Upper lobe of right lung (tissue), 1 donor: ENCODE measurements at regions of chr19 and their contacts with region 1.

Region 1: GRCh38 chr19:2070436-2070827 is 19.4 kb upstream of the MKNK2 start:
- DNase-seq: no peak
- ATAC-seq: no peak
- H3K4me3 ChIP-seq: no peak overlapping the region
- H3K27ac ChIP-seq: no peak overlapping the region
- H3K4me1 ChIP-seq: peaks cover 6% of the 10 kb centered on the region
- H3K27me3 ChIP-seq: no peaks in the 10 kb centered on the region
- CTCF ChIP-seq: no peak

Region 2: GRCh38 chr19:1910169-1910568 is 160.3 kb before region 1 on chr19:
- intact Hi-C with region 1: loop called (anchors 10 kb)
- DNase-seq: no peak
- ATAC-seq: no peak
- H3K4me3 ChIP-seq: no peak overlapping the region
- H3K27ac ChIP-seq: peak overlapping the region; percentile 42
- H3K4me1 ChIP-seq: peaks cover 28% of the 10 kb centered on the region
- H3K27me3 ChIP-seq: no peaks in the 10 kb centered on the region
- CTCF ChIP-seq: no peak

Region 3: GRCh38 chr19:1956868-1957492 is 113.5 kb before region 1 on chr19:
- intact Hi-C with region 1: no loop called
- DNase-seq: peak; percentile 61
- ATAC-seq: no peak
- H3K4me3 ChIP-seq: no peak overlapping the region
- H3K27ac ChIP-seq: no peak overlapping the region
- H3K4me1 ChIP-seq: no peaks in the 10 kb centered on the region
- H3K27me3 ChIP-seq: no peaks in the 10 kb centered on the region
- CTCF ChIP-seq: no peak